WTC11 (cell line): ENCODE measurements at regions of chr20 and their contacts with region 1.

Region 1: GRCh38 chr20:23420943-23421931 is at the start of gene NAPB:
- DNase-seq: peak; percentile 95
- ATAC-seq: peak; percentile 99
- H3K4me3 Mint-ChIP-seq: peak within 1 kb of the TSS; percentile 77
- H3K27ac Mint-ChIP-seq: no peak within 1 kb of the TSS
- H3K4me1 Mint-ChIP-seq: peaks cover 26% of the 10 kb centered on the region
- H3K27me3 Mint-ChIP-seq: peaks cover 6% of the 10 kb centered on the region; the same call in 1 of the 2 replicates
- CTCF ChIP-seq: no peak
- total RNA-seq, gene NAPB: 12.9 to 15.1 TPM (median 13.3 TPM) in 3 replicates

Region 2: GRCh38 chr20:23357767-23358591 is 63.3 kb before region 1 on chr20:
- CTCF ChIA-PET with region 1: interaction called, 4 read pairs
- POLR2A ChIA-PET with region 1: interaction called, 16 read pairs
- DNase-seq: peak; percentile 100
- ATAC-seq: peak; percentile 87
- H3K4me3 Mint-ChIP-seq: peak overlapping the region; percentile 85
- H3K27ac Mint-ChIP-seq: peak overlapping the region; percentile 97
- H3K4me1 Mint-ChIP-seq: peaks cover 27% of the 10 kb centered on the region
- H3K27me3 Mint-ChIP-seq: no peaks in the 10 kb centered on the region
- CTCF ChIP-seq: no peak

Region 3: GRCh38 chr20:23391707-23392310 is 29.4 kb before region 1 on chr20:
- CTCF ChIA-PET with region 1: interaction called, 10 read pairs
- POLR2A ChIA-PET with region 1: no interaction called
- DNase-seq: no peak
- ATAC-seq: peak; percentile 87
- H3K4me3 Mint-ChIP-seq: peak overlapping the region; percentile 22
- H3K27ac Mint-ChIP-seq: peak overlapping the region; percentile 86
- H3K4me1 Mint-ChIP-seq: peaks cover 53% of the 10 kb centered on the region
- H3K27me3 Mint-ChIP-seq: no peaks in the 10 kb centered on the region
- CTCF ChIP-seq: no peak

Region 4: DNA sequence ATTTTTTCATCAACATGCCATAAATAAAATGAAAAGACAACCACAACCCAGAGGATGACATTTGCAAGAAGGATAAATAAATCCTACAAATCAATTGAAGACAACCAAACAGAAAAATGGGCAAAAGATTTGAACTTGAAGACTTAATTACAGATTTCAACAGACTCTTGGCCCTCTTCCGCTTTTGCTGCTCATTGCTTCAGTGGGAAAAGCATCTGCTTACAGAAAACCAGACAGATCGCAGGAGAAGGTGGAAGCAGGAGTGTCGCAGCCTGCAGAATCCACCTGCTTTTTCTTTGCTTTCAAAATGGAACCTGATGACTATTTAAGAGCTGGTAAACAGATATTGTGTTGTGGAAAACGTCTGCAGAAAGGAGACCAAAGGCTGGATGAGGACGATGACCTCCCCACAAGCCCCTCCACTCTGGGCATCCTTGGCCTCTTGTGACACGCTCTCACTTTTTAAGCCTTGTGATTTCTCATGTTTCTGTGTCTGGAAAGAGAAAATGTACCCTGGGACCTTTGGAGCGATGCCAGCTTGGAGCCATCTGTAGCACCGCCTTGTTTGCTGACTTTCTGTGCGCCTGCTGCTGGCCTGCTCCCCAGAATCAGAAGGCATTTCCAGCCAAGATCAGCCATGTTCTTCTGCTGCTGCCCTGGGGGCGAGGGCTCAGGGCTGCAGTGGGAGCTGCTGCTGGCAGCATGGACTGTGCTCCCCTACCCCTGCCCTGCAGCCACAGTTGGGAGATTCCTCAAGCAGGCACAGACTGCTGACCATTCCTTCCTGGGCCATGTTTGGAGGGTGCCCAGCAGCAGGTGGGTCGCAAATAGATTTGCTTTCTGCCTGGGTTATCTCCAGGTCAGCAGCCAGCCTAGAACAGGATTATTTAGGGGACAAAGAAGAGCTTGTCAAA is 14.6 kb after region 1 on chr20:
- CTCF ChIA-PET with region 1: interaction called, 10 read pairs
- POLR2A ChIA-PET with region 1: no interaction called
- DNase-seq: no peak
- ATAC-seq: no peak
- H3K4me3 Mint-ChIP-seq: no peak overlapping the region
- H3K27ac Mint-ChIP-seq: no peak overlapping the region
- H3K4me1 Mint-ChIP-seq: no peaks in the 10 kb centered on the region
- H3K27me3 Mint-ChIP-seq: peaks cover 4% of the 10 kb centered on the region; the same call in 1 of the 2 replicates
- CTCF ChIP-seq: no peak

Region 5: GRCh38 chr20:23441850-23442313 is 20.6 kb after region 1 on chr20:
- CTCF ChIA-PET with region 1: interaction called, 12 read pairs
- POLR2A ChIA-PET with region 1: no interaction called
- DNase-seq: peak; percentile 89
- ATAC-seq: peak; percentile 97
- H3K4me3 Mint-ChIP-seq: no peak overlapping the region
- H3K27ac Mint-ChIP-seq: no peak overlapping the region
- H3K4me1 Mint-ChIP-seq: 0 out of 2 replicates have a peak, but pooled peaks cover 7% of the 10 kb centered on the region
- H3K27me3 Mint-ChIP-seq: peaks cover 4% of the 10 kb centered on the region; the same call in 1 of the 2 replicates
- CTCF ChIP-seq: peak; percentile 80

Region 6: DNA sequence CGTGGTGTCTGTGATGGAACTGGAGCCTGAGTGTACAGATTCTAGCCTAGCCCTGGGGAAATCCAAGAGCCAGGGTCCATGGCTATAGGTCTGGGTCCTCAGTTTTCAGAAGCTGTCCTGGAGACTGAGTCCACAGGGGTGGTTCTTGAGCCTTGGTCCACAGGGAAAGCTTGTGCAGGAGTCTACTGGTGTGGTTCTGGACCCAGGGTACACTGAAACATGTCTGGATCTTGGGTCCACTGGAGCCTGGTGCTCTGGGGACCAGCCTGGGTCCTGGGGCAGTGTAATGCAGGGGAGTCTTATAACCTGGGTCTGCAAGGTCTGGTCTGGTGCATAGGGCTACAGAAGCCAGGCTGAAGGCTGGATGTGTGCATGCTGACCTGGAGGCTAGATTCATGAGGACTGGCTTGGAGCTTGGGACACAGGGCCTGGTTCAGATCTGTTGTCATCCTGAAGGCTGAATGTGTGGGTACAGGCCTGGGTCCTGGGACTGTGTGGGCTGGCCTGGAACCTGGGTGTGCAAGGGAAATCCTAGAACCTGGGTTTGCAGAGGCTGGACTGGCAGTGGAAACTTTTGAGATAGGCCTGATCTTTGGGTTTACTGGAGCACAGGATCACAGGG is 141.6 kb after region 1 on chr20:
- CTCF ChIA-PET with region 1: no interaction called
- POLR2A ChIA-PET with region 1: no interaction called
- DNase-seq: no peak
- ATAC-seq: no peak
- H3K4me3 Mint-ChIP-seq: no peak overlapping the region
- H3K27ac Mint-ChIP-seq: no peak overlapping the region
- H3K4me1 Mint-ChIP-seq: no peaks in the 10 kb centered on the region
- H3K27me3 Mint-ChIP-seq: peaks cover 7% of the 10 kb centered on the region
- CTCF ChIP-seq: no peak